CD8-positive, alpha-beta T cell (primary cell): ENCODE measurements at regions of chr2 and their contacts with region 1.

Region 1: GRCh38 chr2:99180755-99181623 is at the starts of genes MITD1 and MRPL30:
- DNase-seq: peak; percentile 83 to 97 (median 91)
- ATAC-seq: peak; percentile 94
- H3K4me3 ChIP-seq: peak within 1 kb of the TSS; percentile 84 to 90
- H3K4me3 Mint-ChIP-seq: peak within 1 kb of the TSS; percentile 96
- H3K27ac ChIP-seq: peak within 1 kb of the TSS; percentile 85 to 88
- H3K27ac Mint-ChIP-seq: peak within 1 kb of the TSS; percentile 97
- H3K4me1 ChIP-seq: peaks cover 36% of the 10 kb centered on the region
- H3K4me1 Mint-ChIP-seq: peaks cover 69% of the 10 kb centered on the region
- H3K27me3 ChIP-seq: no peaks in the 10 kb centered on the region
- H3K27me3 Mint-ChIP-seq: no peaks in the 10 kb centered on the region
- CTCF ChIP-seq: no peak
- total RNA-seq, gene MITD1: 12.6 to 15.6 TPM
- total RNA-seq, gene MRPL30: 9.4 to 11.4 TPM

Region 2: DNA sequence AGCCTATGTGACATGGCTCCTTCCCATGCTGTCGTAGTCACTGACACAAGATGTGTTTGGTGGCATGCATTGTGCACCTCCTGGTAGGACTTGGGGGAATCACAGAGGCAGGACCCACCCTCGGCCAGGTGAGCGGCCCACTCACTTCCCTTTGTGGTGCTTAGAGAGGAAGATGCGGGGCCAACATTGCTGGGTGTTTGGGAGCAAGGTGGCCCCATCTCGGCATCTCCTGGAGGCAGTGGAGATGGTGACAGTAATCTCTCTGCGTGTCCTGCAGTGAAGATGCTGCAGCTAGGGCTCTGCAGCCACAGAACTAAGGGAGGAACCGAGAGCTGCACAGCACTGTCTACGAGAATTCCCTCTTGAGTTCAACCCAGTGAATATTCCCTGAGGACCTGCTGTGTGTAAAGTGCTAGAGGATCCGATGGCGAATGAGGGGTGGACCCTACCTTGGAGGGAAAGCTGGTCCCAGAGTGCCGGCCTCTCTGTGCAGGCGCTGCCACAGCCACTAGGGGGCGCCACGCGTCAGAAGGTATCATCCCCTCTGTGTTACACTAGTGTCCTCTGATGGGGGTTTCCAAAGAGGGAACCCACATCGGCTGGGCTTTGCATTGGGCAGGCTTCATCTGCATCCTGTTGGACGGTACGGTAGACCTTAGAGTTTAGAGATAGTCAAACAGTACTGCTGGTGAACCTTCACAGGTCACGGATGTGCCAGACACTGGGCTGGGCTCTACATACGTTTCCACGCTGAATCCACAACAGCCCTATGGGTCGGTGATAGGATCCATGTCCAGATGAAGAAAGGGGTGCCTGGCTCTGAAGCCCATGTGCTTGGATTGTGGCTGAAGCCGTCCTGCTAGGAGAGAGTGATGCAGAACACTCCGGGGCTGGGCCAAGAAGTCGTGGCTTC is 611.9 kb before region 1 on chr2:
- CTCF ChIA-PET with region 1: no interaction called
- POLR2A ChIA-PET with region 1: no interaction called
- intact Hi-C with region 1: loop called in 1 of 2 experiments (anchors 1 kb)
- DNase-seq: peak; percentile 49 to 84 (median 71)
- ATAC-seq: peak; percentile 81
- H3K4me3 ChIP-seq: no peak overlapping the region
- H3K4me3 Mint-ChIP-seq: no peak overlapping the region
- H3K27ac ChIP-seq: peak overlapping the region in 1 of 2 experiments; percentile 14
- H3K27ac Mint-ChIP-seq: peak overlapping the region; percentile 75
- H3K4me1 ChIP-seq: no peaks in the 10 kb centered on the region
- H3K4me1 Mint-ChIP-seq: no peaks in the 10 kb centered on the region
- H3K27me3 ChIP-seq: no peaks in the 10 kb centered on the region
- H3K27me3 Mint-ChIP-seq: no peaks in the 10 kb centered on the region
- CTCF ChIP-seq: peak; percentile 91

Region 3: DNA sequence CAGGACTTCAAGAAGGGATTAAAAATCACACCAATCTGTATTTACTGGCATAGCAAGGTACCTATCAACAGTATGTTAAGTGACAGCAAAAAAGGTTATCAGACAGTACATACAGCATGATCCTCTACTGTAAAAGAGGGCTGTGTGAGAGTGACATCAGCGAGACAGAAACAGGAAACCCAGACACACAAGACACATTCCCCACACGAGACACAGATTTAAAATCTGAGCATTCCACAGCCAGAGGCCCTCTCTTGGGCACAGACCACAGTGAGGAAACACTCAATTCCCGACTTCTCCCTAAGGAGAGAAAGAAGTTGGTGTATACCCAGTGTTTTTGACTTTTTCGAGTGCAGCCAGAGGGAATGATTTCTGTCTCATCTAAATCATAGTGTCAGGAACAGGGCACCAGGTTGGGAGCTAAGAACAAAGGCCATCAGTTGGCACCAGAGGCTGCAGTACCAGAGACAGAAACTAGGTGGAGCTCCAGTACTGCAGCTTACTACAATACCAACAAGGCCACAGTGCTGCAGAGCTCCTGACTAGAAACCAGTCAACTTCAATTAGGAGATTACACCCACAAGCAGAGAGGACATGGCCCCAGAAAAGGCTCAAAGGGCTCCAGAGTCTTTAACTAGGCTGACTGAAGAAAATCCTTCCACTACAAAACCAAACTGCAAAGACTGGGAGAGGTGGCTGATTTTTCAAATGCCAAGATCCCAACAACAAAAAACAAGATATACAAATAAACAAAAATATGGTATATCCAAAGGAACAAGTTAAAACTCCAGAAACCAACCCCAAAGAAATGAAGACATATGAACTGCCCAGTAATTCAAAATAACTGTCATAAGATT is 531.6 kb before region 1 on chr2:
- CTCF ChIA-PET with region 1: no interaction called
- POLR2A ChIA-PET with region 1: no interaction called
- intact Hi-C with region 1: loop called in 1 of 2 experiments (anchors 5 kb)
- DNase-seq: peak; percentile 73 to 92 (median 83)
- ATAC-seq: peak; percentile 92
- H3K4me3 ChIP-seq: no peak overlapping the region
- H3K4me3 Mint-ChIP-seq: peak overlapping the region; percentile 37
- H3K27ac ChIP-seq: peak overlapping the region in 1 of 2 experiments; percentile 47
- H3K27ac Mint-ChIP-seq: peak overlapping the region; percentile 99
- H3K4me1 ChIP-seq: peaks cover 52% of the 10 kb centered on the region
- H3K4me1 Mint-ChIP-seq: peaks cover 63% of the 10 kb centered on the region
- H3K27me3 ChIP-seq: no peaks in the 10 kb centered on the region
- H3K27me3 Mint-ChIP-seq: no peaks in the 10 kb centered on the region
- CTCF ChIP-seq: peak; percentile 98

Region 4: DNA sequence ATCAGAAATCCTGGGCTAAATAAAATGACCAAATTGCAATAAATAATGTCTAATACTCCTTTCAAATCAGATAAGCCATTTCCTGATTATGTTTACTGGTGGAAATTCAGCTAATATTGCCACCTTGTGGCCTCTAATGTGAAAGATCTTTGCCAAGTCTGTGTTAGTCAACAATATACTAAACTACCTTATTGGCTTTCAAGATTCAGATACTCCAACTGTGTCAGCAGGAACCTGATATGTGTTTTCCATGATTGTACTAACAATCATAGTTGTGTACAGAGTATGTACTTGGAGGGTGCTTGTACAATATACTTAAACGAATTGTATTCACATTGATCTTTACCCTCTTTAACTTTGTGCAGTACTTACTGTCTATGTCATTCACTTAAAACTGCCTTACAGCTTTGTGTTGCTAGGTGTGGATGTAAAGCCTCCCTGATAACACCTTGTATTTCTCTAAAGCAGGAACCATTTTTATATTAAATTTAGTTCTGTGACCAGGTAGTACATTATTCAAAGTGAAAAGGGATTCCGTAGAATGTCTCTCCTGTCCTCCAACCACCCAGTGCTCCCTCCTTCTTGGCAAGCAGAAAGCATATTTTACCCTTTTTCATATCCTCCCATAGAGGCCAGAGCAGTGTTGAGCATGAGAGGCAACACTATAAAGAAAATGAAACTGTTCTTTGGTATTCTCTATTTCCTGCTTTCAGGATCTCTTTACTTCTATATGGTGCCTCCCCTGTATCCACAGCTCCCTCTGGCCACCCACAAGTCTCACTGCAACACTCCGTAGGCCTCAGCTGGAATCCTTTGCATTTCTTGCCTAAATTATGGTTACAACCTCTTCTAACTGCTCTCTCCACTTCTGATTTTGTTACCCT is 114.7 kb before region 1 on chr2:
- CTCF ChIA-PET with region 1: no interaction called
- POLR2A ChIA-PET with region 1: no interaction called
- intact Hi-C with region 1: loop called in 1 of 2 experiments (anchors 1 kb)
- DNase-seq: peak in 3 of 9 experiments; percentile 29 to 75 (median 45)
- ATAC-seq: peak; percentile 93
- H3K4me3 ChIP-seq: no peak overlapping the region
- H3K4me3 Mint-ChIP-seq: no peak overlapping the region
- H3K27ac ChIP-seq: peak overlapping the region in 1 of 2 experiments; percentile 70
- H3K27ac Mint-ChIP-seq: no peak overlapping the region
- H3K4me1 ChIP-seq: peaks cover 13% of the 10 kb centered on the region
- H3K4me1 Mint-ChIP-seq: peaks cover 2% of the 10 kb centered on the region
- H3K27me3 ChIP-seq: no peaks in the 10 kb centered on the region
- H3K27me3 Mint-ChIP-seq: no peaks in the 10 kb centered on the region
- CTCF ChIP-seq: no peak

Region 5: DNA sequence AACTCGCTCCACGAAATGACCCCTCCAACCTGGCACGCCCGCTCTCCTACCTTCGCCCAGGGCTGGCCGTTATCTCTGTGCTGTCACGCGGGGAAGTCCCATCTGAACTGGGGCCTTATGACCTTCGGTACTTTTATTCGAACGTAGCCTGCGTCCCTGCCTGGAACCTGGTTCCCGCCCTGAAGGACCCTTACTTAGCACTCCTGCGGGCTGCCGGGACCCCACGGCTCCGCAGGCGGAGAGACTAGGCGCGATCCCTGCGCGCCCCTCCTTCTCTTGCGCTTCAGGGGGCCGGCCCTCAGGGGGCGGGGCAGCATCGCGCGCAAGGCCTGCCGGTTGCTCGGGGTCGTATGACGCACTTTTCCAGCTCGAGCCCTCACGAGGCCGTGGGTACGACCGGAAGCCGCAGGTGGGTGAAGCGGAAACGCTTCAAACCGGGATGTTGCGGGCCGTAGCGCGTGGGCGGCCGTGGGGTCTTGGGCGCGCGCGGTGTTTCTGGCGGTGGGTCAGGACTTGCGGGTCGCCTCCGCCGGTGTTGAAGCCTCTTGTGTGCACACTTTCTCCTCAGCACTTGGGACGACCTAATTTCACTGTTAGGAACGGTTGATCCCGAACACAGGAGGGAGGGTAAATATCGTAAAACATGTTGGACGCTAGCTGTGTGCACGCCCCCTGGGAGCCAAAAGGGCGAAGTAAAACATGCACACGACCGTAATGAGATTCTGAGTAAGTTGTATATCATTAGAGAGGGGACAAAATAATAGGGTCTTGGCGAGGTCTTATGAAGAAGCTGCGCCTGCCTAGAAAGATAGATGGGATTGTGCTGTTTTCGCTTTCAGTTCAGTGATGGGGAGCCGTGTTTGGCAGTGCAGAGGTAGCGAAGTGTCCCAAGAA is 26.1 kb before region 1 on chr2 and contains the starts of genes LIPT1 and TSGA10:
- CTCF ChIA-PET with region 1: interaction called, 7 read pairs
- POLR2A ChIA-PET with region 1: interaction called, 14 read pairs
- intact Hi-C with region 1: loop called (anchors 1 kb)
- DNase-seq: peak; percentile 81 to 98 (median 93)
- ATAC-seq: peak; percentile 94
- H3K4me3 ChIP-seq: peak within 1 kb of the TSS; percentile 80 to 92
- H3K4me3 Mint-ChIP-seq: peak within 1 kb of the TSS; percentile 84
- H3K27ac ChIP-seq: peak within 1 kb of the TSS; percentile 95 to 96
- H3K27ac Mint-ChIP-seq: no peak within 1 kb of the TSS
- H3K4me1 ChIP-seq: peaks cover 28% of the 10 kb centered on the region
- H3K4me1 Mint-ChIP-seq: peaks cover 31% of the 10 kb centered on the region
- H3K27me3 ChIP-seq: no peaks in the 10 kb centered on the region
- H3K27me3 Mint-ChIP-seq: no peaks in the 10 kb centered on the region
- CTCF ChIP-seq: no peak
- total RNA-seq, gene LIPT1: 9.7 to 11.0 TPM
- total RNA-seq, gene TSGA10: 14.4 to 14.9 TPM

Region 6: DNA sequence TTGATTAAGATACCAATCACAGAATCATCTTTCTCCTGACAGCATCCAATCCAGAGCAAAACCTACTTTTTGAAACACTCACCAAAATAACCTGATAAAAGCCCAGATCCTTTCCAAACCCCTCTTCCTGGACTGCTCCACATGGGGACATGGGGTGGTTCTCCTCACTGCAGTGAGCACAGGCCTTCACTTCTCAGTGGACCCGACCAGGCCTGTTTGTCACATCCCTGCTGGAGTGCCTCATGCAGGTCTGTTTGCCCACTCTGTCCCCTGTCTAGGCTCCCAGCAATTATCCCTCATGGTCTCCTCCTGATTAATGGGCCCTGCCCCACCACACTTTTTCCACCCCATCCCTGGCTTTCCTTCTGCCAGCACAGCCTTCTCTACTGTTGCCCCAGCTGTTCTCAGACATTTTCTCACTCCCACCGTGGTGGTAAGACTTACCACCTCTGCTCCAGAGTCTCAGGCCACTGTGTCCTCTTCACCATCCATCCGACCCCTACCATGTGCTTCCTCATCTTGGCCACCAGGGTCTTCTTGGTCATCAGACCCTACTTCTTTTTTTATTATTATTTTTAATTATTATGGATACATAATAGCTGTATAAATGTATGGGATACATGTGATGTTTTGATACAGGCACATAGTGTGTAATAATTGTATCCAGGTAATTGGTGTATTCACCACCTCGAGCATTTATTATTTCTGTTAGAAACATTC is 21.1 kb after region 1 on chr2:
- CTCF ChIA-PET with region 1: no interaction called
- POLR2A ChIA-PET with region 1: no interaction called
- intact Hi-C with region 1: no loop called
- DNase-seq: no peak
- ATAC-seq: no peak
- H3K4me3 ChIP-seq: no peak overlapping the region
- H3K4me3 Mint-ChIP-seq: no peak overlapping the region
- H3K27ac ChIP-seq: no peak overlapping the region
- H3K27ac Mint-ChIP-seq: peak overlapping the region; percentile 74
- H3K4me1 ChIP-seq: no peaks in the 10 kb centered on the region
- H3K4me1 Mint-ChIP-seq: peaks cover 2% of the 10 kb centered on the region
- H3K27me3 ChIP-seq: no peaks in the 10 kb centered on the region
- H3K27me3 Mint-ChIP-seq: no peaks in the 10 kb centered on the region
- CTCF ChIP-seq: no peak

Region 7: DNA sequence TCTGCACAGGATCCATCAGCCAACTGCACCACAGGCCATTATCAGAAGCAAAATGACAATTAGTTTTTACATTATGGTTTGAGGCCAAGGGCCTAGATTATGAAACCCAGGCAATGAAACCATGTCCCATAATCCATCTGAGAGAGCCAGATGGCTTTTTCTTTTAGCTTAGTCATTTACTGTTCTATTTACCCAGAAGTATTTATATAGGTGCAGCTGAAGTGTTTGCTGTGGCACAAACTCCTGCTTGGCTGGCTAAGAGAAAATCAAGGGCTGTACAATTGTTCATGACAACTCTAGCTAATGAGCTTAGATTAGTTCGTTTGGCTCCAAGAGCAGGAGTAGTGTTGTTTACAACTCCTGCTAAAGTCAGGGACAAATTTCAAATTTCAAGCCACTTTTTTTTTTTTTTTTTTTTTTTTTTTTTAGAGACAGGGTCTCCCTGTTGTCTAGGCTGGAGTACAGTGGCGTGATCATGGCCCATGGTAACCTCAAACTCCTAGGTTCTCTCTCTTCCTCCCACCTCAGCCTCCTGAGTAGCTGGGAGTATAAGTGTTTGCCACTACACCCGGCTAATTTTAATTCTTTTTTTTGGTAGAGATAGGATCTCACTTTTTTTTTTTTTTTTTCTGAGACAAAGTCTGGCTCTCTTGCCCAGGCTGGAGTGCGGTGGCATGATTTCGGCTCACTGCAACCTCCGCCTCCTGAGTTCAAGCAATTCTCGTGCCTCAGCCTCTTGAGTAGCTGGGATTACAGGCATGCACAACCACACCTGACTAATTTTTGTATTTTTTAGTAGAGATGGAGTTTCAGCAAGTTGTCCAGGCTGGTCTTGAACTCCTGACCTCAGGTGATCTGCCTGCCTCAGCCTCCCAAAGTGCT is 327.2 kb after region 1 on chr2:
- CTCF ChIA-PET with region 1: no interaction called
- POLR2A ChIA-PET with region 1: no interaction called
- intact Hi-C with region 1: no loop called
- DNase-seq: no peak
- ATAC-seq: no peak
- H3K4me3 ChIP-seq: no peak overlapping the region
- H3K4me3 Mint-ChIP-seq: no peak overlapping the region
- H3K27ac ChIP-seq: no peak overlapping the region
- H3K27ac Mint-ChIP-seq: no peak overlapping the region
- H3K4me1 ChIP-seq: no peaks in the 10 kb centered on the region
- H3K4me1 Mint-ChIP-seq: no peaks in the 10 kb centered on the region
- H3K27me3 ChIP-seq: no peaks in the 10 kb centered on the region
- H3K27me3 Mint-ChIP-seq: no peaks in the 10 kb centered on the region
- CTCF ChIP-seq: no peak

Region 8: GRCh38 chr2:101001691-101002561 is 1820.9 kb after region 1 on chr2 and contains the start of gene RPL31:
- CTCF ChIA-PET with region 1: no interaction called
- POLR2A ChIA-PET with region 1: no interaction called
- intact Hi-C with region 1: loop called (anchors 5 to 10 kb)
- DNase-seq: peak; percentile 90 to 98 (median 95)
- ATAC-seq: peak; percentile 97
- H3K4me3 ChIP-seq: peak within 1 kb of the TSS; percentile 92 to 95
- H3K4me3 Mint-ChIP-seq: peak within 1 kb of the TSS; percentile 95
- H3K27ac ChIP-seq: peak within 1 kb of the TSS; percentile 81 to 90
- H3K27ac Mint-ChIP-seq: peak within 1 kb of the TSS; percentile 98
- H3K4me1 ChIP-seq: peaks cover 27% of the 10 kb centered on the region
- H3K4me1 Mint-ChIP-seq: peaks cover 51% of the 10 kb centered on the region
- H3K27me3 ChIP-seq: no peaks in the 10 kb centered on the region
- H3K27me3 Mint-ChIP-seq: no peaks in the 10 kb centered on the region
- CTCF ChIP-seq: no peak
- total RNA-seq, gene RPL31: 2,776 to 2,895 TPM